ENCODE measurements at regions of chr6 and their contacts with region 1.

Region 1: GRCh38 chr6:116287689-116288282 is 8.1 kb upstream of the TSPYL1 start:
- DNase-seq: no peak
- ATAC-seq: peak; percentile 93
- H3K4me3 Mint-ChIP-seq: no peak overlapping the region
- H3K27ac Mint-ChIP-seq: no peak overlapping the region
- H3K4me1 Mint-ChIP-seq: peaks cover 6% of the 10 kb centered on the region
- H3K27me3 Mint-ChIP-seq: no peaks in the 10 kb centered on the region
- CTCF ChIP-seq: peak; percentile 91

Region 2: DNA sequence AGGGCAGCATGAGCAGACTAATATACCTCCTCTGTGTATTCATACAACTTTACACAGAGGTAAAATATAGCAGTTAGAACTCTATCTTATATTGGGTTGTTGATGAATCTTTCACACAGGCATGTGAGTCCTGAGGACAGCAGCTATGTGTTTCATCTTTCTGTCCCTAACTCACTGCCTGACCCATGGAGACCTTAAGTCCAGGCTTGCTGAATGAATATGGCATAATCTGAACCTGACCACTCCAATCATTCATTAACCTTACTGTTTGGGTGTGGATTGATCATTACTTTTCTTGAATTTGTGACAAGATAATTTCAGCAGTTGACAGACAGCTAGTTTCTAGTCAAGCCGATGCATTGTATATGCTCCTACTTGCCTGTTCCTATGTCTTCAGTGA is 19.2 kb after region 1 on chr6:
- CTCF ChIA-PET with region 1: interaction called, 11 read pairs
- POLR2A ChIA-PET with region 1: no interaction called
- DNase-seq: no peak
- ATAC-seq: no peak
- H3K4me3 Mint-ChIP-seq: no peak overlapping the region
- H3K27ac Mint-ChIP-seq: no peak overlapping the region
- H3K4me1 Mint-ChIP-seq: 0 out of 2 replicates have a peak, but pooled peaks cover 4% of the 10 kb centered on the region
- H3K27me3 Mint-ChIP-seq: no peaks in the 10 kb centered on the region
- CTCF ChIP-seq: no peak

Region 3: GRCh38 chr6:116355796-116356195 is 68.0 kb after region 1 on chr6:
- CTCF ChIA-PET with region 1: interaction called, 12 read pairs
- POLR2A ChIA-PET with region 1: no interaction called
- DNase-seq: no peak
- ATAC-seq: no peak
- H3K4me3 Mint-ChIP-seq: no peak overlapping the region
- H3K27ac Mint-ChIP-seq: no peak overlapping the region
- H3K4me1 Mint-ChIP-seq: peaks cover 18% of the 10 kb centered on the region
- H3K27me3 Mint-ChIP-seq: no peaks in the 10 kb centered on the region
- CTCF ChIP-seq: no peak

Region 4: DNA sequence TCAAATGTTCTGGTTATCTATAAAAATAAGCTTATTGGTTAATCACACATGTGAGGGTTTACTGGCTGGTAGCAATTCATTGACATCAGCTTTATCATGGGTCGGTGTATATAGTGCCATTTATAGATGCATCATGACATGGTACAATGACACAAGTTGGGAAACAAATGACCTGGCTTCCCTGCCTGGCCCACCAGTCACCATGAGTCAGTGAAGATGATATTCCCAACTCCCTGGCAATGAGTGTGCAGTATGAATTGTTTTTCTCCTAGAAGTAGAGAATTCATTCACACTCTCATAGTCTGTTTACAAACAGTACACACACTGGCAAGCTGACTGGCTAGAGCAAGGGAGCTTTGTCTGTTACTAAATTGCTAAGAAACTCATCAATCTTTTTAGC is 136.2 kb after region 1 on chr6:
- CTCF ChIA-PET with region 1: interaction called, 23 read pairs
- POLR2A ChIA-PET with region 1: no interaction called
- DNase-seq: no peak
- ATAC-seq: no peak
- H3K4me3 Mint-ChIP-seq: no peak overlapping the region
- H3K27ac Mint-ChIP-seq: no peak overlapping the region
- H3K4me1 Mint-ChIP-seq: peaks cover 45% of the 10 kb centered on the region
- H3K27me3 Mint-ChIP-seq: no peaks in the 10 kb centered on the region
- CTCF ChIP-seq: no peak

Region 5: DNA sequence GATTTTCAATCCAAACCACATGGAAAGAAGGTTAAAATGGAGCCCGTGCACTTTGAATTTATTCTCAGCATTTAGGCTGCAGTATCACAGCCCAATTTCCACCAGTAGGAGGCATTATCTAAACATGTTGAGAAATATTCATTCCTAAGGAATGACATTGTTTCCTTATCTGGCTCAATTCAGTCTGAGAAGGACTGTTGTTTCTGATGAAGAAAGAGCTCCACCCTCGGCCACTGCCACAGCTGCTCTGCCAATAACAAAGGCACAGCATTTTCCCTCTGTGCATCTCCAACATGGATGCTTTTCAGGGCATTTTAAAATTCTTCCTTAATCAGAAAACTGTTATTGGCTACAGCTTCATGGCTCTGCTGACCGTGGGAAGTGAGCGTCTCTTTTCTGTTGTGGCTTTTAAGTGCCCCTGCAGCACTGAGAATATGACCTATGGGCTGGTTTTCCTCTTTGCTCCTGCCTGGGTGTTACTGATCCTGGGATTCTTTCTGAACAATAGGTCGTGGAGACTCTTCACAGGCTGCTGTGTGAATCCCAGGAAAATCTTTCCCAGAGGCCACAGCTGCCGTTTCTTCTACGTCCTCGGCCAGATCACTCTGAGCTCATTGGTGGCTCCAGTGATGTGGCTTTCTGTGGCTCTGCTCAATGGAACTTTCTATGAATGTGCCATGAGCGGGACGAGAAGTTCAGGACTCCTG is 223.8 kb after region 1 on chr6 and contains the start of gene CALHM5:
- CTCF ChIA-PET with region 1: interaction called, 19 read pairs
- POLR2A ChIA-PET with region 1: no interaction called
- DNase-seq: no peak
- ATAC-seq: peak; percentile 90
- H3K4me3 Mint-ChIP-seq: no peak within 1 kb of the TSS
- H3K27ac Mint-ChIP-seq: peak within 1 kb of the TSS; percentile 81
- H3K4me1 Mint-ChIP-seq: peaks cover 18% of the 10 kb centered on the region
- H3K27me3 Mint-ChIP-seq: no peaks in the 10 kb centered on the region
- CTCF ChIP-seq: peak; percentile 26; the same call in 1 of the 2 replicates
- total RNA-seq, gene CALHM5: 0.07 to 0.11 TPM (median 0.09 TPM) in 3 replicates

Region 6: GRCh38 chr6:116561377-116562018 is 273.7 kb after region 1 on chr6:
- CTCF ChIA-PET with region 1: interaction called, 24 read pairs
- POLR2A ChIA-PET with region 1: no interaction called
- DNase-seq: peak; percentile 77
- ATAC-seq: peak; percentile 80
- H3K4me3 Mint-ChIP-seq: peak overlapping the region; percentile 34
- H3K27ac Mint-ChIP-seq: 0 out of 2 replicates have a peak overlapping the region, but pooled peaks have one; percentile 20
- H3K4me1 Mint-ChIP-seq: peaks cover 4% of the 10 kb centered on the region
- H3K27me3 Mint-ChIP-seq: no peaks in the 10 kb centered on the region
- CTCF ChIP-seq: peak; percentile 83

Region 7: GRCh38 chr6:116797585-116797984 is 509.8 kb after region 1 on chr6:
- CTCF ChIA-PET with region 1: no interaction called
- POLR2A ChIA-PET with region 1: no interaction called
- DNase-seq: no peak
- ATAC-seq: no peak
- H3K4me3 Mint-ChIP-seq: no peak overlapping the region
- H3K27ac Mint-ChIP-seq: no peak overlapping the region
- H3K4me1 Mint-ChIP-seq: 0 out of 2 replicates have a peak, but pooled peaks cover 4% of the 10 kb centered on the region
- H3K27me3 Mint-ChIP-seq: no peaks in the 10 kb centered on the region
- CTCF ChIP-seq: no peak